ENCODE measurements at regions of chr22 and their contacts with region 1.

Region 1: DNA sequence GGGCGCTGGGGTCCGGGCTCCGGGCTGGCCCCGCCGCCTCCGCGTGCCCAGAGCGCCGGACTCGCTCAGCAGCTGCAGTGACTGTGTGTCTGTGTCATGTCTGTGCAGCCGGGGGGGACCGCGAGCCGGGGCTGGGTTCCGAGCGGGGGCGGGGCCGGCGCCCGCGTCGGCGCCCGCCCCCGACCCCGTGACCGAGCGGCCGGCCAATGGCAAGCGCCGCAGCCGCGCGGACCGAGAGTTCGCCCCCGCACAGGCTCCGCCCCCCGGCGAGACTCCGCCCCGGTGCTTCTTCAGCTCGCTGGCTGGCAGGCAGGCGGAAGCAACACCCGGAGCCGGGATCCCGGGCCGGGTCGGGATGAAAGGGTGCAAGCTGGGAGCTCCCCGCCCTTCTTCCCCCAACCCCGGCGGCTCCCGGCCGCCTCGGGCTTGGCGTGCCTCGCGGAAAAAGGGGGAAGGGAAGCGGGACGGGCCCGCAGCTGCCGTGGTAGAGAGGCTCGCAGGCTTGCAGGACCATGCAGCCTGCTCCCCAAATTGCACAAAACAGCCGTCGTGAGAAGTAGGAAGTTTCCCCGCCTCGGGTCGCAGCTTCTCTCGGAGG is 750 bp upstream of the LARGE1 start:
- DNase-seq: peak; percentile 95 to 97
- ATAC-seq: peak; percentile 78 to 81
- H3K4me3 ChIP-seq: peak overlapping the region; percentile 71 to 95 (median 82)
- H3K27ac ChIP-seq: peak overlapping the region; percentile 74 to 87 (median 78)
- H3K4me1 ChIP-seq: peaks cover 33 to 40% of the 10 kb centered on the region in 2 donors
- H3K27me3 ChIP-seq: no peaks in the 10 kb centered on the region
- CTCF ChIP-seq: peak in 1 of 5 experiments; percentile 10
- POLR2A ChIP-seq: peak; percentile 95 to 97

Region 2: GRCh38 chr22:33726294-33726734 is 194.7 kb before region 1 on chr22:
- in situ Hi-C with region 1: no loop called
- intact Hi-C with region 1: loop called (anchors 5 kb)
- DNase-seq: peak; percentile 8 to 36
- ATAC-seq: peak; percentile 90 to 95
- H3K4me3 ChIP-seq: no peak overlapping the region
- H3K27ac ChIP-seq: peak overlapping the region; percentile 34 to 73 (median 60)
- H3K4me1 ChIP-seq: peaks cover 34 to 36% of the 10 kb centered on the region in 2 donors
- H3K27me3 ChIP-seq: no peaks in the 10 kb centered on the region
- CTCF ChIP-seq: no peak
- POLR2A ChIP-seq: no peak

Region 3: DNA sequence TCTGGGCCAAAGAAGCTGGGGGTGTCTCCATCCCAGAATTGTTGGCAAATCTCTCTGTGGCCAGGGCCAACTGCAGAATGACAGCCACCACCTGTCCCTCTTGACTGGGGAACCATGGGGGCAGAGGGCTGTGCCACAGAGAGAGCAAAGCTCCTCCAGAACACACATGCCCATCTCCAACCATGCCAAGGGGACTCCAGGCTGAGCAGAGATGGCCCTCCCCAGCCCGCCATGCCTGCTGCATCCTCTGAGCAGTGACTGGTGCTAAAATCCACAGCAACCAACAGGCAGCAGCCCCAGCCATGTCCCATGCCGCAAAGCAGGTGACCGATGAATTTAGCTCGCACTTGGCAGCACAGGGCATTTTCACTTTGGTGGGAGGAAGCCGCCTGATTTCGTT is 45.7 kb before region 1 on chr22:
- in situ Hi-C with region 1: no loop called
- intact Hi-C with region 1: loop called (anchors 2 kb)
- DNase-seq: peak; percentile 61 to 89
- ATAC-seq: peak; percentile 67 to 87
- H3K4me3 ChIP-seq: peak overlapping the region; percentile 25 to 41 (median 31)
- H3K27ac ChIP-seq: peak overlapping the region; percentile 84 to 88 (median 86)
- H3K4me1 ChIP-seq: peaks cover 49 to 52% of the 10 kb centered on the region in 2 donors
- H3K27me3 ChIP-seq: no peaks in the 10 kb centered on the region
- CTCF ChIP-seq: no peak
- POLR2A ChIP-seq: peak in 1 of 2 donors; percentile 28

Region 4: DNA sequence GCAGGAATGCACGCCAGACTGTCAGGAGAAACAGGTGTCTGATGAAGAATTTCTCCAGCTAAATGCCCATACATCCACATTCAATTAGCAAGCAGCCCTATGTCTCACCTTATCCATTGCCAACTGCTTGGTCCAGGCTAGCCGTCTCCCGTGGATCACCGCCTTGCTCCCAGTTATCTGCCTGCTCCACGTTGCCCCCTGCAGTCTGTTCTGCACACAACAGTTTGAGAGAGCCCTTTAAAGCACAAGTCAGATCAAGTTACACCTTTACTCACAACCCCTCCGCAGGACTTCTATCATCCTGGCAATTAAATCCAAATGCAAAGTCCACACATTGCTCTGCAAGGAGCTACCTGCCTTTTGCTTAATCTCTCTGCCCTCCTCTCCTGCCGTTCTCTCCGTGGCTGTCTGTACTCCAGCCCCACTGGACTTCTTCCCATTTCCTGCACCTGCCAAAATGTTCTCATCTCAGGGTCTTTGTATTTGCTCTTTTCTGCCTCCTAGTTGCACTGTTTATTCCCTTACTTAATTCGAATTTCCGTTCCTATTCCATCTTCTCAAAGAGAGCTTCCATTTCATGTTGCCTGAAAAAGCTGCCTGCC is 184.5 kb after region 1 on chr22:
- in situ Hi-C with region 1: loop called in 3 of 4 experiments (anchors 5 to 10 kb)
- intact Hi-C with region 1: loop called (anchors 2 kb)
- DNase-seq: peak in 1 of 2 donors; percentile 28
- ATAC-seq: peak; percentile 45 to 66
- H3K4me3 ChIP-seq: no peak overlapping the region
- H3K27ac ChIP-seq: no peak overlapping the region
- H3K4me1 ChIP-seq: no peaks in the 10 kb centered on the region
- H3K27me3 ChIP-seq: peaks cover 0 to 10% (median 0%) of the 10 kb centered on the region in 3 donors
- CTCF ChIP-seq: peak in 4 of 5 experiments; percentile 36 to 61 (median 52)
- POLR2A ChIP-seq: no peak

Region 5: DNA sequence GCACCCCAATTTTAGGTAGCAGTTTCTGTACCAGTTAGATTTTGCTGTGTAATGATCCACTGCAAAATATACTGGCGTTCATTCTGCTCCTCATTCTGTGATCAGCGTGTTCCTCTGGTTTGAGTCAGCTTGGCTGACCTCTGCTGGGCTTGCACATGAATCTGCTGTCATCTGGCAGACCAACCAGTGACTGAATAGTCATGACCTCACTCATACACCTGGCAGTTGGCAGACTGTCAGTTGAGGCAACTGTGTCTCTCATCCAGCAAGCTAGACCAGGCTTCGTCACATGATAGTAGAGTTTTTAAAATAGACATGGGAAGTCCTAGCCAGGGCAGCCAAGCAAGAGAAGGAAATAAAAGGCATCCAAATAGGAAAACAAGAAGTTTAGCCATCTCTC is 315.5 kb after region 1 on chr22:
- in situ Hi-C with region 1: no loop called
- intact Hi-C with region 1: loop called (anchors 10 kb)
- DNase-seq: peak; percentile 52 to 90
- ATAC-seq: peak; percentile 89 to 100
- H3K4me3 ChIP-seq: no peak overlapping the region
- H3K27ac ChIP-seq: peak overlapping the region; percentile 69 to 78 (median 74)
- H3K4me1 ChIP-seq: no peaks in the 10 kb centered on the region
- H3K27me3 ChIP-seq: no peaks in the 10 kb centered on the region
- CTCF ChIP-seq: no peak
- POLR2A ChIP-seq: peak; percentile 15 to 16

Measured in gastrocnemius medialis (tissue), 4 donors.